Activated T-helper 2 cell treated with anti-CD3 and anti-CD28 coated beads, Interferon-gamma antibody, Interleukin-2, Interleukin-4, amounts not matched to agents 10 μg/mL and 5 μg/mL and 100 μg/mL, durations not matched to agents 14 hours and 24 hours and 36 hours (primary cell): ENCODE measurements at regions of chr6 and their contacts with region 1.

Region 1: DNA sequence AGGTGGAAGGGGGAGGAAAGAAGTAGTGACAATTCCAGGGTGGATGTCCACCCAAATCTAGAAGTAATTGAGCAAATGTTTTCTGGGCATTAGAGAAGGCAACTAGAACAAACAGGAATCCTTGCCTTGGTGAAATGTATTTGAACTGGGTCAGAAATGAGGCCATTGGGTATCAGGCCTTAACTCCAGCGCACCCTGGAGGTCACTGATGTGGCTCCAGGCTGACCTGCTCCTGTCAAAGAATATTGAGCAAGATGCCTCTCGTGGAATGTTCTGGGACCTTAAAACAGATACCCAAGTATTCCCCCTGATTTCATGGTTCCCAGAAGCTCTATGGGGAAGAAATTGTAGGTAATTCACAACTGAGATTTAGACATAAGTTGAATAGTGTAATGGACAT is 6.9 kb downstream of the HLA-DPB1 start:
- DNase-seq: no peak
- H3K4me3 Mint-ChIP-seq: no peak overlapping the region
- H3K27ac Mint-ChIP-seq: no peak overlapping the region
- H3K4me1 Mint-ChIP-seq: peaks cover 13% of the 10 kb centered on the region
- H3K27me3 Mint-ChIP-seq: no peaks in the 10 kb centered on the region

Region 2: GRCh38 chr6:33000055-33000454 is 82.6 kb before region 1 on chr6:
- intact Hi-C with region 1: no loop called
- DNase-seq: no peak
- H3K4me3 Mint-ChIP-seq: no peak overlapping the region
- H3K27ac Mint-ChIP-seq: no peak overlapping the region
- H3K4me1 Mint-ChIP-seq: peaks cover 7% of the 10 kb centered on the region
- H3K27me3 Mint-ChIP-seq: peaks cover 56% of the 10 kb centered on the region

Region 3: DNA sequence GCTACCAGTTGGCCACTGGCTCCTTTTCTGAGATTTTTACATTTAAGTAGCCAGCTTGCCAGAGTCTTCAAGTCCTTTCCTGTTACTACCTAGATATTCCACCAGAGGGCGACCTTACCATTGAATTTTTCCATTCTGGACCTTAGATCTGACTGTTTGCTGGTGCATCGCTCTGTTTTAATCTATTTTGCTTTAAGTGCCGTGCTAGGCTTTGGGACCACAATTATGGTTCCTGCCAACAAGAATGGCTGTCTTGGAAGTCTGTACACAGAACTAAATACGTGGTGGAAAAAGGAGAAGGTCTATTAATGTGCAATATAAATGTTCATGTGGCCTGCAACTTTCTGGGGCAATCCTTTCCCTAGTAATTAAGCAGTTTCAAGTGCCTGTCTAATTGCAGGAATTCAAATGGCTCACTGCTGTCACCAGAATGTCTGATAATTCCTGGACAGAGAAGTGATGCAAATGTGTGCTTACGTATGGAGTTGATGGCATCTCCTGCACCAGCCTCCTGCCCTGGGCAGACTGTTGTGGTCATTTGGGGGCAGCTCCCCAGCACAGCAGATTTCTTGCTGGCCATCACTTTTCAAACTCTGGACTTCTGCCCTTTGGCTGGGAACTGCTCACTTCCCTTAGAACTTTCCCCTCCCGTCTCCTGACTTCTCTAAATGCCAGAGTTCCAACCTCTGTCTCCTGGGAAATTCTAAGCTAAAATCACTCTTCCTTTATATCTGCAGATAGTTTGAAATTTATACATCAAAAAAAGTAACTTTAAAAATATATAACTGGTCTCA is 67.7 kb before region 1 on chr6:
- intact Hi-C with region 1: loop called (anchors 1 kb)
- DNase-seq: peak; percentile 49
- H3K4me3 Mint-ChIP-seq: no peak overlapping the region
- H3K27ac Mint-ChIP-seq: no peak overlapping the region
- H3K4me1 Mint-ChIP-seq: peaks cover 25% of the 10 kb centered on the region
- H3K27me3 Mint-ChIP-seq: peaks cover 21% of the 10 kb centered on the region